ENCODE measurements at regions of chr17 and their contacts with region 1.

Region 1: DNA sequence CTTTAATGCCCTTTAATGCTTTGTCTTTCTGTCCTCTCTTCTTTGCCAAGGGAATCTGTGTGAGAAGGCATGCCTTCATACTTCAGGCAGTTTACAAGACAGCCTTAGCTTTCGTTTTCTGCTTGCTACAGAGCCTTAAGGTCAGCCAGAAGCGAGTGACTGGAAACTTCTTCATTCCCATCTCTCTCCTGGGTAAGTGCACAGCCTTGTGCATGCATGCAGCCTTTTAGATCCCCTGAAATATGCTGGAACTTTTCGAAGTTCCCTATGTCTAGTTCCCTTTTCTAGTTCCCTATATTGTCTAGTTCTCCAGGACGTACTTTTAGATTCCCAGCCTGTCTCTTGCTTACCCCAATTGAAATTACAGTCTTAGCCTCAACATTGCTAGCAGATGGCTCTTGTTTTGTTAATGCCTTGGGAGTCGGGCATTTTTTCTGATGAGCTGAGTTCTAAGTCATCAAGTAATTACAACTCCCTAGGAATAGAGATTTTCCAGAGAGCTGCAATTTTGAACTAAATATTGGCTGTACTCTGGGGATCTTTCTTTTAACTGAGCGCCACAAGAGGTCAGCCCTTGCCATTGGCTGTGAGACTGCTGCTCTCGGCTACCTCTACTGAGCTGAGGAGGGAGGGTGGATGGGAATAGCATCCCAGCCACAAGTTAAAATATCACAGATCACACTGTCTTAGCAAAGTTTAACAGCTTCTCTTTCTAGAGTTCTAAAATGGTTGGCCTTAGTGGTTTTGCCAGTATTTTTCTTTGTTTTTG is 22.7 kb upstream of the PPM1D start:
- DNase-seq: peak; percentile 29
- CTCF ChIP-seq: peak; percentile 38

Region 2: DNA sequence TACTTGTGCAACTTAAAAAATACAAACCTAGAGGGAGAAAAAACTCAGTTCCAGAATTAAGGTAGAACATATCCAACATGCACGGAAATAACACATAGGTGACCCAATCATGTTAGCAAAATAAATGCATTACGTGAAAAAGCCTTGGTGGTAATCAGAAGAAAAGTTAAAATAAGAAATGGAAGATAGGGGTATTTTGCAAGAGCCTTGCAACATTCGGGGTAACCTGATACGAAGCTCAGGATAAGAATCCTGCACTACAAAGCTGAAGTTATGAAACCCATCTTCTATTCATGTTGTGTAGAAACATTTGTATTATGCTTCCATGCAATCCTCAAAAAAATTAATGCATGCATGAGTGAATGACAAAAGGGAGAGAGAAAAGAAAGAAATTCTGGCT is 122.0 kb before region 1 on chr17:
- CTCF ChIA-PET with region 1: no interaction called
- POLR2A ChIA-PET with region 1: no interaction called
- DNase-seq: no peak
- CTCF ChIP-seq: no peak

Region 3: GRCh38 chr17:60594734-60595133 is 17.4 kb after region 1 on chr17:
- CTCF ChIA-PET with region 1: interaction called, 69 read pairs
- POLR2A ChIA-PET with region 1: no interaction called
- DNase-seq: no peak
- CTCF ChIP-seq: no peak

Measured in GM10248 (cell line).